ENCODE measurements at regions of chr5 and their contacts with region 1.

Region 1: GRCh38 chr5:107224272-107224671 is 446.5 kb downstream of the EFNA5 start:
- H3K4me3 ChIP-seq: no peak overlapping the region
- H3K27ac ChIP-seq: no peak overlapping the region
- H3K4me1 ChIP-seq: no peaks in the 10 kb centered on the region
- CTCF ChIP-seq: no peak

Region 2: GRCh38 chr5:107169869-107170268 is 54.4 kb before region 1 on chr5:
- CTCF ChIA-PET with region 1: interaction called, 10 read pairs
- POLR2A ChIA-PET with region 1: no interaction called
- H3K4me3 ChIP-seq: no peak overlapping the region
- H3K27ac ChIP-seq: no peak overlapping the region
- H3K4me1 ChIP-seq: no peaks in the 10 kb centered on the region
- CTCF ChIP-seq: no peak

Region 3: GRCh38 chr5:107203243-107203642 is 21.0 kb before region 1 on chr5:
- CTCF ChIA-PET with region 1: no interaction called
- POLR2A ChIA-PET with region 1: no interaction called
- H3K4me3 ChIP-seq: no peak overlapping the region
- H3K27ac ChIP-seq: no peak overlapping the region
- H3K4me1 ChIP-seq: no peaks in the 10 kb centered on the region
- CTCF ChIP-seq: no peak

Measured in HEK293 (cell line).